ENCODE measurements at regions of chr14 and their contacts with region 1.

Region 1: DNA sequence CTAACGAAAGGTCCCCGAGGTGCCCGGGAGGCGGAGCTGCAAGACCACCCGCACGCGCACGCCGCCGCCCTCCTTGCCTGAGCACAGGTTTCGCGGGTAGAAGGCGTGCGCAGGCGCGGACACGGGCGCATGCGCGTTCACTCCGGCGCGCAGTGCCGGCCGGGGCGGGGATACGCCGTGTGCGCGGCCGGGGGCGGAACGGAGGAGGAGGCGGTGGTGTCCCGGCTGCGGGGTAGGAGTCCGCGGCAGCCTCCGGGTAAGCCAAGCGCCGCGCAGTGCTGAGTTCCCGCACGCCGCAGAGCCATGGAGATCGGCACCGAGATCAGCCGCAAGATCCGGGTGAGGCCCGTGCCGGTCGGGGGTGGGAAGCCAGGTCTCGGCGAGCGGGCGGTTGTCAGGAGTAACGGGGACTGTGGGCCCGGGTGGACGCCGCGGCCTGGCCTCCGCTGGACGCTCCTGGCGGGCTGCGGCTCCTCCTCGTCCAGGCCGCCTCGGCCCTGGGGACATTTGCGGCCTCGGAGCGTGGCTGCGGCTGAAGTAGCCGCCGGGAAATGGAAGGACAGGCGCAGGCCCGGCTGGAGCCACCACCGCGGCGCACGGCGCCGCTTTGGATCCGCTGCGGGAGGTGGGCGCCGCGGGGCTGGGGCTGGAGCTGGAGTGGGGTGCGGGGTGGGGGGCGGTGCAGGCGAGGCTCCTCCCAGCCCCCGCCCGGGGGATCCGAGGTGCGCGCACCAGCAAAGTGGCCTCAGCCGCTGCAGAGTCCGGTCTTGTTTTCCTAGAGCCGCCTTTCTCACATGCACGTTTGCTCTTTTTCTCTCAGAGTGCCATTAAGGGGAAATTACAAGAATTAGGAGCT is at the start of gene ZC3H14:
- DNase-seq: peak; percentile 86 to 96 (median 90)
- ATAC-seq: peak; percentile 98
- H3K4me3 ChIP-seq: peak within 1 kb of the TSS; percentile 90 to 97
- H3K27ac ChIP-seq: peak within 1 kb of the TSS; percentile 90 to 91
- H3K4me1 ChIP-seq: peaks cover 10 to 17% of the 10 kb centered on the region in 2 donors
- H3K27me3 ChIP-seq: no peaks in the 10 kb centered on the region
- CTCF ChIP-seq: no peak
- polyA plus RNA-seq, gene ZC3H14: 75.3 to 86.2 (median 81.3) TPM

Region 2: GRCh38 chr14:88312257-88312656 is 250.8 kb before region 1 on chr14:
- intact Hi-C with region 1: no loop called
- DNase-seq: no peak
- ATAC-seq: no peak
- H3K4me3 ChIP-seq: no peak overlapping the region
- H3K27ac ChIP-seq: no peak overlapping the region
- H3K4me1 ChIP-seq: no peaks in the 10 kb centered on the region
- H3K27me3 ChIP-seq: peaks cover 0 to 11% of the 10 kb centered on the region in 2 donors
- CTCF ChIP-seq: no peak

Region 3: GRCh38 chr14:88385345-88386101 is 177.5 kb before region 1 on chr14 and contains the start of gene SPATA7:
- intact Hi-C with region 1: no loop called
- DNase-seq: peak; percentile 95 to 99 (median 97)
- ATAC-seq: peak; percentile 100
- H3K4me3 ChIP-seq: peak within 1 kb of the TSS; percentile 70 to 92
- H3K27ac ChIP-seq: peak within 1 kb of the TSS; percentile 80 to 83
- H3K4me1 ChIP-seq: peaks cover 16 to 17% of the 10 kb centered on the region in 2 donors
- H3K27me3 ChIP-seq: no peaks in the 10 kb centered on the region
- CTCF ChIP-seq: no peak
- polyA plus RNA-seq, gene SPATA7: 22.8 to 31.4 (median 24.1) TPM

Region 4: DNA sequence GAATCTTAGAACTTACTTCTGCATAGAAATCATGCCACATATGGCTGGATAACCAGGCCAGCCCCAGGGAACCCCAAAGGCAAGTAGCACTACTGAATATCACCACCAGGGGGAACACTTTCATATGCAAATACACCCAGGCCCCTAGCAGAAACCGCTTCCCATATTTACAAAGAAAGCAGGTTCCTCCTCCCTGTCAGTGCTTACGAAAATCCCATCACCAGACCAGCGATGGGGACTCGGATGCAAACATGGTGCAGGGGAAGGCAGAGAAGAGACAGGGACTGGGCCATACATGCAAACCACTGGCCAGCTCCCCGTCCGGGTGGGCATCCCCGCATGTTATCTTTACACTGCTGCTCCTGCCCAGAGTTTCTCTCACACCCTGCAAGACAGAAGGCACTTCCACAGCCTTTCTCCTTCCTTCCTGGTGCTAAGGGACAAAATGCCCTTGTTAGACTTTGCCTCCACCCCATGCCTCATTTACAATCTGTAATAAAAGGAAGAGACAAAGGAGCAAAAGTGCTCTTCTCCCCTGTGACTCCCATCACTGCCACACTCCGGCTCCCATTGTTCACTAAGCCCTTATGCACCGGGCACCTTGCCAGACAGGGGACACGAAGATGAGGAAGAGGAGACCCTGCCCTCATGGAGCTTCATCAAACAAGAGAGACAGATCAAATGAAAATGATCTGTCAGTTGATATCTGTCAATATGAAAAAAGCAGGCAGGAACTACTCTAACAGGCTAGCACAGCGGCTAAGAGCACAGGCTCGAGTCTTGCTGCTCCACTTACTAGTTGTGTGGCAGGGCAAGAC is 70.6 kb before region 1 on chr14:
- intact Hi-C with region 1: loop called in 1 of 2 experiments (anchors 10 kb)
- DNase-seq: peak in 3 of 4 donors; percentile 39 to 72 (median 54)
- ATAC-seq: peak; percentile 96
- H3K4me3 ChIP-seq: no peak overlapping the region
- H3K27ac ChIP-seq: no peak overlapping the region
- H3K4me1 ChIP-seq: no peaks in the 10 kb centered on the region
- H3K27me3 ChIP-seq: no peaks in the 10 kb centered on the region
- CTCF ChIP-seq: peak; percentile 91 to 97

Measured in left lung (tissue), 14 donors.